Heart right ventricle (tissue), 16 donors: ENCODE measurements at regions of chr15 and their contacts with region 1.

Region 1: GRCh38 chr15:45221967-45222366 is 30.1 kb upstream of the SLC28A2 start:
- DNase-seq: no peak
- ATAC-seq: no peak
- H3K4me3 ChIP-seq: no peak overlapping the region
- H3K27ac ChIP-seq: no peak overlapping the region
- H3K4me1 ChIP-seq: no peaks in the 10 kb centered on the region
- H3K27me3 ChIP-seq: peaks cover 0 to 24% (median 0%) of the 10 kb centered on the region in 7 donors
- CTCF ChIP-seq: no peak

Region 2: DNA sequence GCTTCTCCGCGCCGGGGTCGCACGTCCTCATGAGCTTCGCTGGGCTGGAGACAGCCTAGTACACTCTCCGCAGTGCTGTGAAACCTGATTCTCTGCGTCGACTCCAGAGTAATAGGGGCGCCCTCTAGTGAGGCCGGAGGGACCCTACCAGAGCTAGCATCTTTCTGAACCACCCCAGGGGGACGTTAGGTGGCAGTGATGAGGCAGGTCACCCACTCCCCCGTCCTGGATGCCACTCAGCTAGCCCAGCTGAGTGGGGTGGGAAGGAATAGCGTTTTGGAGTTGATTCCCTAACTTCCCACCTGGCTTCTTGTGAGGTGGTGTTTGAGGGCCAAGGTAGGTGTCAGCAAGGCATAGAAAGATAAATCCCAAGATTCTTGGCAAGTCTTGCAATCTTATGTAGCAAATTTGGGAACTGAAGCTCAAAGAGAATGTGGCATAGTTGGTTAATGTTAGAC is 103.8 kb before region 1 on chr15:
- intact Hi-C with region 1: no loop called
- DNase-seq: peak; percentile 81 to 89
- ATAC-seq: peak; percentile 93 to 97 (median 96)
- H3K4me3 ChIP-seq: peak overlapping the region in 8 of 10 donors; percentile 16 to 44 (median 34)
- H3K27ac ChIP-seq: no peak overlapping the region
- H3K4me1 ChIP-seq: peaks cover 8 to 35% (median 15%) of the 10 kb centered on the region in 9 donors
- H3K27me3 ChIP-seq: peaks cover 22 to 94% (median 80%) of the 10 kb centered on the region in 7 donors
- CTCF ChIP-seq: peak; percentile 90 to 100 (median 99)

Region 3: GRCh38 chr15:45187894-45188830 is 33.8 kb before region 1 on chr15 and contains the start of gene SHF:
- intact Hi-C with region 1: no loop called
- DNase-seq: peak; percentile 64
- ATAC-seq: peak; percentile 62 to 86 (median 81)
- H3K4me3 ChIP-seq: peak within 1 kb of the TSS; percentile 54 to 90 (median 72)
- H3K27ac ChIP-seq: peak within 1 kb of the TSS; percentile 53 to 81 (median 70)
- H3K4me1 ChIP-seq: peaks cover 0 to 33% (median 22%) of the 10 kb centered on the region in 9 donors
- H3K27me3 ChIP-seq: peaks cover 0 to 24% (median 0%) of the 10 kb centered on the region in 7 donors
- CTCF ChIP-seq: no peak
- total RNA-seq, gene SHF: 3.6 to 8.4 (median 5.6) TPM

Region 4: DNA sequence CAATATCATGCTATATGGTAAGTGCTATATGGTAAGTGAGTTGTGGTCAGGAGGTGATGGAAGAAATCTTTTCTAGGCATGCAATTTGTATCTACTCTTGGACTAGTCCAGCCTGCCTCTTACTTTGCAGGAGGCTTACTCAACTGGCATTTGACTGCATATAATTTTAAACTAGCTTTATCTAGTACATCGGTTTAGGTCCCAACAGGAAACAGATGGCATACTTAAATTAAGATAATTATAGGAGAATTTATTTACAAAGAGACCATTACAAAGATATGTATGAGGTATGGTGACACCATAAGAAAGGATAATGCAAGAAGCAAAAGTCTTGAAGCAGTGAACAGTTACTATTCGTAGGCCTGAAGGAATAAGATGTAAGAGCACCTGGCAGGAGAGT is 37.8 kb after region 1 on chr15:
- intact Hi-C with region 1: loop called in 1 of 10 experiments (anchors 5 kb)
- DNase-seq: no peak
- ATAC-seq: no peak
- H3K4me3 ChIP-seq: no peak overlapping the region
- H3K27ac ChIP-seq: no peak overlapping the region
- H3K4me1 ChIP-seq: no peaks in the 10 kb centered on the region
- H3K27me3 ChIP-seq: no peaks in the 10 kb centered on the region
- CTCF ChIP-seq: no peak